Aorta (tissue), 5 donors: ENCODE measurements at regions of chr2 and their contacts with region 1.

Region 1: DNA sequence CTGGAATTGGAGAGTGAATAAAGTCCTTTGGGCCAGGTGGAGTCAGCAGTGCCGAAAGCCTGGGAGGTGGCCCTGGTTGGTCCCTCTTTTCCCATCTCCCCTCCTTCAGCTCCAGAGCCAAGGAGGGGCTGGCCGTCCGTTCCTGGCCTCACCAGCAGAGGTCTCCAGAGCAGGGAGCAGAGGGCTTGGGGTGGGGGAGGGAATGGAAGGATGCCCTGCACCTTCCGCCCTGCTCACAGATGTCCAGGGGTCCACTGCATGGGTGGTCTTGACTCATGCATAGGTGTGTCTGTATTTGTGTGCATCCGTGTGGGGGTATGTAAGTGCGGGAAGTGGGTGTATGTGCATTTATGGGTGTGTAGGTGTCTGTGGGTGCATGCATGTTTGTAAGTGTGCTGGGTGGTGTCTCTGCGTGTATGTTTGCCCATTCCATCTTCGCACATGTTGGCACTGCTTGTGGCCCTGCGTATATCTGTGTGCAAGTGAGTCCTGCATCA is 201.8 kb downstream of the ZFP36L2 start:
- DNase-seq: peak; percentile 76 to 90
- ATAC-seq: peak; percentile 64
- H3K4me3 ChIP-seq: no peak overlapping the region
- H3K27ac ChIP-seq: no peak overlapping the region
- H3K4me1 ChIP-seq: peaks cover 0 to 1% of the 10 kb centered on the region in 2 donors
- H3K27me3 ChIP-seq: no peaks in the 10 kb centered on the region

Region 2: DNA sequence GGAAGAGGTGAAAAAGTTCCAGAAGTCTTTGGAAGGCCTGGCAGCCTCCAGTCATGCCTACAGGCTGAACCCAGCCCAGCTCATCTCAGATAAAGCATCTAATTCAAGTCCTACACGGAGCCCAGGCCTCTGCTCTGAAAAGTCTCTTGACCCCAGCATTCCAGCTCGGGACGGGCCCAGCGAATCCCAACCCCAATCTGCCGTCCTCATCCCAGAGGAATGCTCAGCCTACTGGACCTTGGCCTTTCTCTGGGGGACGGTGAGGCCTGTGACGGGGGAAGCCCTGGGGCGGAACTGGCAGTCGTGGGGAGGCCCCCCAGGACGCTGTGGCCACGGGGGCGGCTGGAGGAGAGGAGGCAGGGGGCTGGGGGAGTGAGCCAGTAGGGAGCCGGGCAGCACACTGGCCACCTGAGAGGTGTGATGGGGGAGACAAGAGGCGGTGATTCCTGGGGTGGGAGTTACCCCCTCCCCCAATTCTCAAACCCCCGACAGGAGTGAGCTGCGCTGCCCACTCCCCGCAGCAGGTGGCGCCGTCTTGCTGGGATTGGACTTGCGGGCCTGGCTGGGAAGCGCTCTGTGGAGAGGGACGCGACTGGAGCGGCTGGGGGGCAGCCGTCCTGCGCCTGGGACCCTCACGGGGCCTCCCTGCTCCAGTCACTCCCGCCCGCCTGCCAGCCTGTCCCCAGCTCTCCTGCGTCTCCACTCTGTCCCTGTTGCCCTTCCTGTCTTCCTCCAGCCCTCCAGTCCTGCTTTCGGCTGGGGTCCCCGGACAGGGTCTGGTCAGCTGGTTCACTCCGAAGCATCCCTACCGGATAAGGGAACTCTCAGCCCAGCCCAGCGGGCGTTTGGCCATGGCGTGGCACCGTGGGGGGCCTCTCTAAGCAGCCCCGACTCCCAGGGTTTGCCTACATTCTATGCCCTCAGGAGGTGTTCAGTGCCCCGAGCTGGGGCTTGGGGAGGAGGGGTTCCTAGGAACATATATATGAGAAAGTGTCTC is 49.5 kb before region 1 on chr2:
- intact Hi-C with region 1: loop called in 1 of 2 experiments (anchors 5 kb)
- DNase-seq: peak; percentile 90 to 93
- ATAC-seq: peak; percentile 93
- H3K4me3 ChIP-seq: peak overlapping the region in 1 of 2 donors; percentile 53
- H3K27ac ChIP-seq: no peak overlapping the region
- H3K4me1 ChIP-seq: no peaks in the 10 kb centered on the region
- H3K27me3 ChIP-seq: no peaks in the 10 kb centered on the region